ENCODE measurements at regions of chr21 and their contacts with region 1.

Region 1: GRCh38 chr21:43866260-43866629 is 1.2 kb downstream of the AGPAT3 start:
- DNase-seq: no peak
- ATAC-seq: peak; percentile 17 to 32 (median 22)
- H3K4me3 ChIP-seq: peak overlapping the region; percentile 48 to 85 (median 68)
- H3K27ac ChIP-seq: peak overlapping the region; percentile 77 to 89 (median 89)
- H3K4me1 ChIP-seq: peaks cover 0 to 32% (median 14%) of the 10 kb centered on the region in 4 donors
- H3K27me3 ChIP-seq: no peaks in the 10 kb centered on the region
- CTCF ChIP-seq: no peak
- POLR2A ChIP-seq: no peak

Region 2: DNA sequence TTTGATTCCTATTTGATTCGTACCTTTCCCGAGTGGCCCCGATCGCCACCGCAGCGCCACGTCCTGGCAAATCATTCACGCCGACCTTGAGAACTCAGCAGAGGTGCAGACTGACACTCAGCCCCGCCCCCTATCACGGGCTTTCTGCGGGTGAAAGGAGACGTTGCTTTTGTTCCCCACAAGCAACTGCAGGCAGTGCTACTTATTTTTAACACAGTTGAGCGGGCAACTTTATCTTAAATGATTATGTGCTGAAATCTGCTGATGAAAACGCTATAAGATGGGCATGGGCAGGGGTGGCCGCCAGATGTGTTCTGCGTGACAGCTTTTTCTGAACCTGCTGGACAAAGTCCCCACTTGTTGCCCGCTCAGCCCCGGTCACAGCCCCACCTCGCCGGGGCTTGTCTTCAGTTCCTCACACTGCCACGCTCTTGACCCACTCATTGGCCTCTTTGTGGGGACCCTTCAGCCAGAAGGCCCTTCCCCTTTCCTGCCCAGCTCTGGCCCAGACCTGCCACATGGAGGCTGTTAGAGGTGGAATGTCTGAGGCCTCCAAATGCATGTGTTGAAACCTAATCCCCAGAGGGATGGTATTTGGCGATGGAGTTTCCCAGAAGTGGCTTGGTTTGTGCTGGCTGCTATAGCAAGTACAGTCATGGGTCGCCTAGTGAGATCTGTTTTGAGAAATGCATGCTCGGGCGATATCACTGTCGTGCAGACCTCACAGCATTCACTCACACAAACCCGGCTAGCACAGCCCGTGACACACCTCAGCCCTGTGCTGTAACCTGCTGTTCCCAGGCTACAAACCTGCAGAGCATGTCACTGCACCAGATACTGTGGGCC is 163.0 kb before region 1 on chr21:
- intact Hi-C with region 1: no loop called
- DNase-seq: peak in 1 of 3 donors; percentile 2
- ATAC-seq: peak in 3 of 4 donors; percentile 53 to 60 (median 59)
- H3K4me3 ChIP-seq: no peak overlapping the region
- H3K27ac ChIP-seq: no peak overlapping the region
- H3K4me1 ChIP-seq: peaks cover 0 to 3% (median 0%) of the 10 kb centered on the region in 4 donors
- H3K27me3 ChIP-seq: no peaks in the 10 kb centered on the region
- CTCF ChIP-seq: no peak
- POLR2A ChIP-seq: no peak

Region 3: DNA sequence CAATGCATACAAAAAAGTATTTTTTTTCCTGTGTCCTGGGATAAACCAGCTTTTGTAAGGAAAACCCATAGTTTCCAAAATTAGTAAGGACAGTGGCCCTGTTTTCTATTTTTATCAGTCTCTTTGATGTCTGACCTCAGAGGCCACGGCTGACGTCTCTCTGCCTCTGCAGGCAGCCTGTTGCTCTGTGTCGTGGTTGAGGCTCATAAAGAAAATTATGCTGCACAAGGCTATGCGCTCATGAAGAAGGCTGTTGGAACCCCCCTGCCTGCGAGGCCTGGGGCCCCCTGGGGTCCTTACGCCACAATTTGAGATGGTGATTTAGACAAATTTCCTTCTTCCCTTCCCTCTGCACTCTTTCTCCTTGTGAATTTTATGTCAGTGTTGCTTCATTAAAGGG is 47.7 kb after region 1 on chr21:
- intact Hi-C with region 1: loop called in 1 of 2 experiments (anchors 5 kb)
- DNase-seq: no peak
- ATAC-seq: no peak
- H3K4me3 ChIP-seq: no peak overlapping the region
- H3K27ac ChIP-seq: no peak overlapping the region
- H3K4me1 ChIP-seq: peaks cover 0 to 39% (median 16%) of the 10 kb centered on the region in 4 donors
- H3K27me3 ChIP-seq: no peaks in the 10 kb centered on the region
- CTCF ChIP-seq: no peak
- POLR2A ChIP-seq: no peak

Region 4: GRCh38 chr21:43921979-43922945 is 56.0 kb after region 1 on chr21:
- intact Hi-C with region 1: loop called in 1 of 2 experiments (anchors 10 kb)
- DNase-seq: peak in 2 of 3 donors; percentile 21 to 48
- ATAC-seq: no peak
- H3K4me3 ChIP-seq: no peak overlapping the region
- H3K27ac ChIP-seq: peak overlapping the region in 1 of 3 donors; percentile 37
- H3K4me1 ChIP-seq: peaks cover 0 to 62% (median 30%) of the 10 kb centered on the region in 4 donors
- H3K27me3 ChIP-seq: no peaks in the 10 kb centered on the region
- CTCF ChIP-seq: no peak
- POLR2A ChIP-seq: no peak

Measured in right lobe of liver (tissue), 6 donors.